CD8-positive, alpha-beta T cell (primary cell): ENCODE measurements at regions of chr17 and their contacts with region 1.

Region 1: DNA sequence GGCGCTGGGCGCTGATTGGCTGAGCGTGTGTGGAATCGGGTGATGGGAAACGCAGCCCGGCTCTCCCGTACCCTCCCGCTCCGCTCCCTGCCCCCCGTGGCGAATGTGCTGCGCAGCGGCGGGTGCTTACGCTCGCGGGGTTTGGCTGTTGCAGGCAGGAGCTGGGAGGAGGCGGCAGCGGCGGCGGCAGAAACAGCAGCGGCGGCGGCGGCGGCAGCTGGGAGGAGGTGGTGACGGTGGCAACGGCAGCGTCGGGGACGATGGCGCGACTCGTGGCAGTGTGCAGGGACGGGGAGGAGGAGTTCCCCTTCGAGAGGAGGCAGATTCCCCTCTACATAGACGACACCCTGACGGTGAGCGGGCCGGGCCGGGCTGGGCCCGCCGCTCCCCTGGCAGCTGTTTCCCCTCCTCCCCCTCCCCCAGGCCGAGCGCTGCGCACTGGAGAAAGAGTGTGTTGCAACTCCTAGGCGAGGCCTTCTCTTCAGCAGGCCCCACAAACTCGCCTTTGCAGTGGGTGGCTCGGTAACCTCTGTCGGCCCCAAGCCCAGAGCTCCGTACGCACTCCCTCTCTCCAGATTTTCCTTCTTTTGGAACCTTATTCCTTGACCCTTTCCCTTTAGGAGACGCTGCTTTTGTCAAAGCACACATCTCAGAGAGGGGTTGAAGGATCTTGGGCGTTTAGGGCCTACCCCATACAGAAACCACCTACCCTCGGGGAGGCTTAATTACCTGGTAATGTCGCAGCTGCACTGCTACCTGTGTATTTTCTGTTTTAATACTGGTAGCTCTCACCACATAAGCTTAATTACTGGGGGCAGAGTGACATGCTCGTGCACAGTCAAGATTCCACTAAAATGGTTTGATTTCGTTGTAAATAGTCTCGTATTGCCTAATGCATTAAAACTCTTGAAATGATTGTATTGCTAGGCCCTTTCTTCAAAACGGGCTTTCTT is 1.0 kb downstream of the GGNBP2 start:
- DNase-seq: peak; percentile 92 to 99 (median 97)
- ATAC-seq: peak; percentile 76
- H3K4me3 ChIP-seq: peak overlapping the region; percentile 66 to 94
- H3K4me3 Mint-ChIP-seq: peak overlapping the region; percentile 95
- H3K27ac ChIP-seq: peak overlapping the region; percentile 67 to 96
- H3K27ac Mint-ChIP-seq: peak overlapping the region; percentile 96
- H3K4me1 ChIP-seq: peaks cover 44% of the 10 kb centered on the region
- H3K4me1 Mint-ChIP-seq: peaks cover 50% of the 10 kb centered on the region
- H3K27me3 ChIP-seq: no peaks in the 10 kb centered on the region
- H3K27me3 Mint-ChIP-seq: no peaks in the 10 kb centered on the region
- CTCF ChIP-seq: no peak

Region 2: GRCh38 chr17:36591434-36592315 is 45.9 kb after region 1 on chr17 and contains the start of gene DHRS11:
- CTCF ChIA-PET with region 1: no interaction called
- POLR2A ChIA-PET with region 1: no interaction called
- intact Hi-C with region 1: loop called in 1 of 2 experiments (anchors 2 kb)
- DNase-seq: peak; percentile 30 to 84 (median 76)
- ATAC-seq: peak; percentile 93
- H3K4me3 ChIP-seq: peak within 1 kb of the TSS; percentile 55 to 60
- H3K4me3 Mint-ChIP-seq: peak within 1 kb of the TSS; percentile 82
- H3K27ac ChIP-seq: peak within 1 kb of the TSS; percentile 42 to 44
- H3K27ac Mint-ChIP-seq: peak within 1 kb of the TSS; percentile 88
- H3K4me1 ChIP-seq: peaks cover 14% of the 10 kb centered on the region
- H3K4me1 Mint-ChIP-seq: peaks cover 24% of the 10 kb centered on the region
- H3K27me3 ChIP-seq: no peaks in the 10 kb centered on the region
- H3K27me3 Mint-ChIP-seq: no peaks in the 10 kb centered on the region
- CTCF ChIP-seq: no peak
- total RNA-seq, gene DHRS11: 1.7 to 2.6 TPM

Region 3: GRCh38 chr17:37643118-37643766 is 1097.5 kb after region 1 on chr17 and contains the start of gene DDX52:
- CTCF ChIA-PET with region 1: no interaction called
- POLR2A ChIA-PET with region 1: no interaction called
- intact Hi-C with region 1: loop called in 1 of 2 experiments (anchors 5 kb)
- DNase-seq: peak; percentile 79 to 95 (median 86)
- ATAC-seq: peak; percentile 99
- H3K4me3 ChIP-seq: peak within 1 kb of the TSS; percentile 78 to 96
- H3K4me3 Mint-ChIP-seq: peak within 1 kb of the TSS; percentile 94
- H3K27ac ChIP-seq: peak within 1 kb of the TSS; percentile 77 to 89
- H3K27ac Mint-ChIP-seq: peak within 1 kb of the TSS; percentile 94
- H3K4me1 ChIP-seq: peaks cover 20% of the 10 kb centered on the region
- H3K4me1 Mint-ChIP-seq: peaks cover 44% of the 10 kb centered on the region
- H3K27me3 ChIP-seq: no peaks in the 10 kb centered on the region
- H3K27me3 Mint-ChIP-seq: peaks cover 27% of the 10 kb centered on the region
- CTCF ChIP-seq: no peak
- total RNA-seq, gene DDX52: 33.6 to 35.1 TPM